ENCODE measurements at regions of chr1 and their contacts with region 1.

Region 1: GRCh38 chr1:54397090-54397591 is 9.1 kb downstream of the SSBP3 start:
- DNase-seq: peak; percentile 45

Region 2: DNA sequence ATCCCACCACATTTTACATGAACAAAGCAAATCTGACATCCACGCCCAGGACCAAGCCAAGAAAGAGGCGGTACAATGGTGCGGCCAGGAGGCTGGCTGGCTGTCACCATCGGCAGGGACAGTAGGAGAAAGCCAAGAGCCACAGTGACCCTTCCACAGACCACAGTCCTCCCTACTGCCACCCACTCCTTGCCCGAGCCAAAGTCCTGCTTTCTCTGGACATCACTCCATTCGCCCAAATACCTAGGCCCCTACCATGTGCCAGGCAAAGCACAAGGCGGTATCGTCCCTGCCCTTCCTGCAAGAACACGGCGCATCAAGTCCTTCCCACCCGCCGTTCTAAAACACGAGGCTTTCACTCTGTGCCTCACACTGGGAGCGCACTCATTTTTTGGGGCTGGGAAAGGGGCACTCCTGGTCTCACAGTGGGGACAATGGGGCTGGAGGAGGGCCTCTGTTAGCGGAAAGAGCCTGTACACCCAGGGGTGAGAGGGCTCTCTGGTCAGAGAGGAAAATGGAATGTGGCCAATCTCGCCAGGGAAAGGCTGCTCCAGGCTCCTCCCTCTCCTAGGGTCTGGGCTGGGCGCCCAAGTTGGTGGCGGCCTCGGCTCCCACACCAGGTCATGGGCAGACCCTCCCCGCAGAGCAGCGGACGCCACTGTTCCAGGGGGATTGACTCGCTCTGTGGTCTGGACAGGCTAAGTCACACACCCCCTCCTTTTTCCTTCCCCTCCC is 17.4 kb before region 1 on chr1:
- intact Hi-C with region 1: loop called in 1 of 2 experiments (anchors 2 kb)
- DNase-seq: no peak

Region 3: DNA sequence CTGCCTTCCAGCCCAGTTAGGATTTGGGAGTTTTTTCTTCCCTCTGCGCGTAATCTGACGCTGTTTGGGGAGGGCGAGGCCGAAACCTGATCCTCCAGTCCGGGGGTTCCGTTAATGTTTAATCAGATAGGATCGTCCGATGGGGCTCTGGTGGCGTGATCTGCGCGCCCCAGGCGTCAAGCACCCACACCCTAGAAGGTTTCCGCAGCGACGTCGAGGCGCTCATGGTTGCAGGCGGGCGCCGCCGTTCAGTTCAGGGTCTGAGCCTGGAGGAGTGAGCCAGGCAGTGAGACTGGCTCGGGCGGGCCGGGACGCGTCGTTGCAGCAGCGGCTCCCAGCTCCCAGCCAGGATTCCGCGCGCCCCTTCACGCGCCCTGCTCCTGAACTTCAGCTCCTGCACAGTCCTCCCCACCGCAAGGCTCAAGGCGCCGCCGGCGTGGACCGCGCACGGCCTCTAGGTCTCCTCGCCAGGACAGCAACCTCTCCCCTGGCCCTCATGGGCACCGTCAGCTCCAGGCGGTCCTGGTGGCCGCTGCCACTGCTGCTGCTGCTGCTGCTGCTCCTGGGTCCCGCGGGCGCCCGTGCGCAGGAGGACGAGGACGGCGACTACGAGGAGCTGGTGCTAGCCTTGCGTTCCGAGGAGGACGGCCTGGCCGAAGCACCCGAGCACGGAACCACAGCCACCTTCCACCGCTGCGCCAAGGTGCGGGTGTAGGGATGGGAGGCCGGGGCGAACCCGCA is 642.4 kb after region 1 on chr1 and contains the start of gene PCSK9:
- intact Hi-C with region 1: no loop called
- DNase-seq: peak; percentile 79
- total RNA-seq, gene PCSK9: 0.32 TPM in 1 of 2 donors, not detected in the other

Region 4: GRCh38 chr1:55727010-55727409 is 1329.9 kb after region 1 on chr1:
- intact Hi-C with region 1: no loop called
- DNase-seq: no peak